Thyroid gland (tissue), 4 donors: ENCODE measurements at regions of chr1 and their contacts with region 1.

Region 1: GRCh38 chr1:9196129-9197040 is 38.2 kb upstream of the H6PD start:
- DNase-seq: peak; percentile 74 to 75
- H3K4me3 ChIP-seq: no peak overlapping the region
- H3K27ac ChIP-seq: peak overlapping the region in 1 of 3 donors; percentile 41
- H3K4me1 ChIP-seq: peaks cover 7 to 27% of the 10 kb centered on the region in 2 donors
- H3K27me3 ChIP-seq: peaks cover 13% of the 10 kb centered on the region
- CTCF ChIP-seq: peak; percentile 61 to 91 (median 84)
- POLR2A ChIP-seq: no peak

Region 2: DNA sequence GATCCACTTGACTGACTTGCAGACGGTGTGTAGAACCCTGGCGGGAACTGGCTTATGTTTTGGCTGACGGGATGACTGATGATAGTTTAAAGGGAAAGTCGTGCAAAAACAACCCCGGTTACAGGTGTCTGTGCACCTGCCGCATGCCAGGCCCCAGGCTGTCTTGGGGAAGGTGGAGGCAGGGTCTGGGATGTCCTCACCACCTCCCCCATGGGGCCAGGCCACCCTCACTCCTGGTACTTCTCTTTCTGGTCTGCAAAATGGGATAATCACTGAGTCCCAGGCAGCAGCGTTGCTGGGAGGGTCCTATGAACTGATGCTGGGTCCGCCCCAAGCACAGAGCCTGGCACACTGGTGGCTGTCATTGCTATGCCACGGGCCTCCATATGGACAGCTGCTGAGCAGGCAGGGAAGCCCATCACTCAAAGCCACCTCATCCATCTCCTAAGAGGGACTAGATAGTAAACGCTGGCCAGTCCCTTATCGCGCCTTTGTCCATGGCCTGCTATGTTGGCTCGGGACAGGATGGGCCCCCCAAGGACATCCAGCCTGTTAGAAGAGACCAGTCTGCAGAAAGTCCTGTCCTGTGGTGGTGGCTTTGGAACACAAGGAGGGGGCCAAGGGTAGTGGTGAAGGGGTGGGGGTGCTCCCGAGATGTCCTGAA is 155.1 kb before region 1 on chr1:
- intact Hi-C with region 1: no loop called
- DNase-seq: no peak
- H3K4me3 ChIP-seq: no peak overlapping the region
- H3K27ac ChIP-seq: no peak overlapping the region
- H3K4me1 ChIP-seq: no peaks in the 10 kb centered on the region
- H3K27me3 ChIP-seq: no peaks in the 10 kb centered on the region
- CTCF ChIP-seq: no peak
- POLR2A ChIP-seq: no peak

Region 3: GRCh38 chr1:9110669-9111356 is 85.6 kb before region 1 on chr1:
- intact Hi-C with region 1: loop called (anchors 5 kb)
- DNase-seq: peak; percentile 87 to 91
- H3K4me3 ChIP-seq: no peak overlapping the region
- H3K27ac ChIP-seq: no peak overlapping the region
- H3K4me1 ChIP-seq: peaks cover 0 to 4% of the 10 kb centered on the region in 2 donors
- H3K27me3 ChIP-seq: no peaks in the 10 kb centered on the region
- CTCF ChIP-seq: peak; percentile 74 to 92 (median 90)
- POLR2A ChIP-seq: no peak

Region 4: DNA sequence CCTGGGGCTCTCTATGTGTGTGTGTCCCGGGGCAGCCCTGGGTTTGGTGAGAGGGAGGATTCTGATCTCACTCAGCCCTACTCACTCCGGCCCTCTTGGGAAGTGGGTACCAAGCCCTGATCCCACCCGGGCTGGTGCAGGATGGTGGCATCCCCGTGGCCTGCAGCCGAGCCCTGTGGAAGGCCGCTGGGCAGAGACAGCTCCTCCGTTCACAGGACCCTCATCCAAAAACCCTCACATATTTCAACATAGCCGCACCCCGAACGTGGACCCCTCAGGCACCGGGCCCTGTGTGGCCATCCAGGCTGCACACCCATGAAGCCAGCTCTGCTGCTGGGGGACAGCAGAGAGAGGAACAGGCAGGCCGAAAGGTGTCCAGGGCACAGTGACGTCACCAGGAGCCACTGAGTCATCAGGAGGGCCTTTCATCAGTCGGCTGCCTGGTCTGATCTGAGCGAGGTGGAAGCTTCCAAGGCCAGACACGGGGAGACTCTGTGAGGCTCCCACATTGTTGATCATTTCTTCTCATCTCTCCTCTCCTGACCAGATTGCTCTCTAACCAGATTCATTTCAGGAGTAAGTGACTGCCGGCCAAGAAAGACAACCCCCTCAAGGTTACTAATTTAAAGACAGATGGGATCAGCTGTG is 51.2 kb before region 1 on chr1:
- intact Hi-C with region 1: loop called (anchors 10 kb)
- DNase-seq: no peak
- H3K4me3 ChIP-seq: no peak overlapping the region
- H3K27ac ChIP-seq: no peak overlapping the region
- H3K4me1 ChIP-seq: peaks cover 8 to 11% of the 10 kb centered on the region in 2 donors
- H3K27me3 ChIP-seq: no peaks in the 10 kb centered on the region
- CTCF ChIP-seq: no peak
- POLR2A ChIP-seq: no peak